Right cardiac atrium (tissue), 5 donors: ENCODE measurements at regions of chr7 and their contacts with region 1.

Region 1: GRCh38 chr7:64951250-64951848 is 39.5 kb downstream of the ZNF117 start:
- DNase-seq: no peak
- ATAC-seq: peak; percentile 45 to 61
- H3K4me3 ChIP-seq: no peak overlapping the region
- H3K27ac ChIP-seq: no peak overlapping the region
- H3K4me1 ChIP-seq: no peaks in the 10 kb centered on the region
- H3K27me3 ChIP-seq: no peaks in the 10 kb centered on the region

Region 2: DNA sequence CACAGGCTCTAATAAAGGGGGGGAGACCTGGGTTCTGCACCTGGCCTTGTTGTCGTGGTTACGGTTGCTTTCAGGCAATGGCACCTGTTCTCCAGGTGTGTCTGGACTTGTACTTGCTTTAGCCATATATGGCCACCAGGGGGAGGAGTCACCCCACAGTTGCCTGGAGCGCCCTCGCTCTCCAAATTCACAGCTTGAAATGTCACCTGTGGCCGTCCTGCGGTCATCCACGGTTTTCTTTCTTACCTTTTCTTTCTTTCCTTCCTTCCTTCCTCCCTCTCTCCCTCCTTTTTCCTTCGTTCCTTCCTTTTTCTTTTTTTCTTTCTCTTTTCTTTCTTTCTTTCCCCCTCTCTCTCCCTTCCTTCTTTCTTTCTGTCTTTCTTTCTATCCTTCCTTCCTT is 265.1 kb after region 1 on chr7:
- intact Hi-C with region 1: loop called in 1 of 4 experiments (anchors 10 kb)
- DNase-seq: peak; percentile 27 to 57 (median 53)
- ATAC-seq: peak in 1 of 2 donors; percentile 50
- H3K4me3 ChIP-seq: no peak overlapping the region
- H3K27ac ChIP-seq: no peak overlapping the region
- H3K4me1 ChIP-seq: no peaks in the 10 kb centered on the region
- H3K27me3 ChIP-seq: no peaks in the 10 kb centered on the region

Region 3: DNA sequence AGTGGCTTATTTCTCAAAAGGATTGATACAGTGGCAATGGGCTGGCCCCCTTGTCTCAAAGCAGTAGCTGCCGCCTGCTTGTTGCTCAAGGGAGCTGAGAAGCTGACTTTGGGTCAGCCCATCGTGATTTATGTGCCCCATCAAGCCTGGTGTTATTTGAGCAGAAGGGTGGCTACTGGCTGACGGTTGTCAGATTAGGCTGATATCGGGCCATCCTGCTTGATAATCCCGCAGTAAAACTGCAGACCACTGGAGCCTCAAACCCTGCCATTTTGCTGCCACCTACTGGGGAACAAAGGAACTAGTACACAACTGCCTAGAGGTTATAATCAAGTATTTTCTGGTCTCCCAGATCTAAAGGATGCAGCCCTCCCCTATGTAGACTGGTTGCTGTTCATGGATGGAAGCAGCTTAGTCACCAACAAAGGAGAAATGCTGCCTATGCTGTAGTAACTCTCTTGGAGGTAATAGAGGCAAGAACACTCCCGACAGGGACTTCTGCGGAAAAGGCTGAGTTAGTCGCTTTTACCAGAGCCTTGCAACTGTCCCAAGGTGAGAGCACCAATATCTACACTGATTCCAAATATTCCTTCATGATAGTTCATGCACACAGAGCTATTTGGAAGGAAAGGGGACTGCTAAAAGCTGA is 356.4 kb after region 1 on chr7:
- intact Hi-C with region 1: loop called in 2 of 4 experiments (anchors 2 to 10 kb)
- DNase-seq: no peak
- ATAC-seq: peak; percentile 57 to 76
- H3K4me3 ChIP-seq: no peak overlapping the region
- H3K27ac ChIP-seq: no peak overlapping the region
- H3K4me1 ChIP-seq: no peaks in the 10 kb centered on the region
- H3K27me3 ChIP-seq: no peaks in the 10 kb centered on the region